ENCODE measurements at regions of chrX and their contacts with region 1.

Region 1: DNA sequence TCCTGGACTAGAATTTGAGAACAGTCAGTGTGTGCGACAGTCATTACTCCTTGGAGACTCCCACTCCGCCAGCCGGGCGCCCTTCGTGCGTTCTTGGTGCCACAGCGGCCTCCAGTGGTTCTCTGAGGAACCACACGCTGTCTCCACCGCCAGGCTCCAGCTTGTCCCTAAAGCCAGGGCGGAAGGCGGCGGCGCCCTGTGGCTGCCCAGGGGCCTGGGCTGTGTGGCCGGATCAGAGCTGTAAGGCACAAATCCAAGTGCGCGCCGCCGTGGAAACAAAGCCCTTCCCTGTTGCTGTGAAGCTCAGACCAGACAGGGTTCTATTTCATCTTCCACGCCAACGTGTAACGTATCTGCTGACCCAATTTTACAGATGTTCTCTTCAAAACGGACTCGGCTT is 34.2 kb downstream of the IDS start:
- DNase-seq: peak; percentile 85

Region 2: DNA sequence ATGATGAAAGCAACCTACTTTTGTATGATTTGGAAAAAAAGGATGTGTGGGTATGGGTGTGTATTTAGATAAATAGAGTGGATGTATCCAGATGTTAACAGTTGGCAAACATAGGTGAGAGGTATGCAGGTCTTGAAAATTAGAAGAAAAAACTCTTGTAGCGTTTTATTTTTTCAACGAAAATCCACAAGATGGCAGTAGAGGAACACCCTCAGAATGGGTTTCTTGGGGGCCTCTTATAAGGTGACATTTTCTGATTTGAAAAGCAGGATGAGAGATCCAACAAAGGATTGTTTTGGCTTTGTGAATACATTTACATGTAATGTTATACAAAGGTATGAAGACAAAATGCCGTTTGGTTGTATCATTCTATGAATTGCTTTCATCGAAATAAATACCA is 1421.5 kb before region 1 on chrX:
- intact Hi-C with region 1: loop called (anchors 5 kb)
- DNase-seq: no peak

Region 3: GRCh38 chrX:148133105-148133725 is 1337.7 kb before region 1 on chrX:
- intact Hi-C with region 1: loop called (anchors 5 kb)
- DNase-seq: no peak

Region 4: GRCh38 chrX:149248073-149248625 is 222.8 kb before region 1 on chrX:
- intact Hi-C with region 1: no loop called
- DNase-seq: no peak

Measured in cardiac septum (tissue), 1 donor.